GM13977 (cell line): ENCODE measurements at regions of chrX and their contacts with region 1.

Region 1: GRCh38 chrX:107654872-107655761 is 26.8 kb downstream of the PRPS1 start:
- DNase-seq: peak; percentile 44
- CTCF ChIP-seq: peak; percentile 89

Region 2: GRCh38 chrX:105876658-105877057 is 1778.5 kb before region 1 on chrX:
- in situ Hi-C with region 1: no loop called
- DNase-seq: peak; percentile 2
- CTCF ChIP-seq: peak; percentile 40

Region 3: GRCh38 chrX:107729547-107730297 is 74.6 kb after region 1 on chrX:
- in situ Hi-C with region 1: loop called (anchors 10 kb)
- DNase-seq: no peak
- CTCF ChIP-seq: no peak

Region 4: GRCh38 chrX:107776649-107777535 is 121.8 kb after region 1 on chrX:
- in situ Hi-C with region 1: loop called (anchors 5 kb)
- DNase-seq: peak; percentile 85
- CTCF ChIP-seq: peak; percentile 82

Region 5: GRCh38 chrX:107818900-107819521 is 163.9 kb after region 1 on chrX:
- in situ Hi-C with region 1: no loop called
- DNase-seq: no peak
- CTCF ChIP-seq: no peak